T-cell (primary cell): ENCODE measurements at regions of chr1 and their contacts with region 1.

Region 1: DNA sequence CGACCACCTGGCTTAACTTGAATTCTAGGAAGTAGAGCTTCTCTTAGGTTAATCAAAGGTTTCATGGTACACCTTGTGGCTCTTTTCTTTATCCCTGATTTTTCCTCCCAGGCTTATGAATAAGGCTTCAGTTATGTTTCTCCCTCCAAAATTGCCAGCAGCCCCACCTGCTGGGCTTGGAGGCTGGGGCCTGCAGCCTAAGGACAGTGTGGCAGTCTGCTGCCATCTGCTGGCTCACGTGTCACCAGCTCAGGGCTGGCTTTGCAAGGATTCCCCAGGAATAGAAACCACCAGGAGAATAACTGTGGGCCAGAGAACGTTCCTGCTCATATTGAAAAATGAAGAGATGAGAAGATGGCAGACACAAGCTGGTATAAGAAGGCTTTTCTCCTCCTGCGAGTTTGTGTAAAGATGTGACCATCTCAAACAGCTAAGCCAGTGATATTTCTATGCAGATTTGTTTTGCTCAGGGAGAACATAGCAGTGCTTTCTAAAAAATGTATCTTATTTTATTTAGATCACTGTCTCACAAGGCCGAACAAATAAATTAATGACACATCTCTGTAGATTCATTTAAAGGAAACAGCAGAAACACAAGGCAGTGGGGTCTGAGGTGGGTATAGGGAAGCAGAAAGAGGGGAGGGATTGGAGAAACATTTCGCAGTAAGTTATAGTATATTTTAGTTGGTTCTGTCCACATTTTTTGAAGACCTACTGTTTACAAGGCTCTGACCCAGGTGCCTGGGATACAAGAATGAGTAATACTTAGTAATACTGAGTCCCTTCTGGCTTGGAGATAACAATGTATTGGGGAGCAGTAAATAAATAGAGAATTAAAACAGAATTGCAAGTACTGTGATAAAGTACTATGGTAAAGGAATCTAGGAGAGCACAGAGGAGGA is 291.1 kb upstream of the SGIP1 start:
- DNase-seq: peak; percentile 28 to 85 (median 65)
- ATAC-seq: peak; percentile 76 to 90 (median 83)
- H3K4me3 ChIP-seq: no peak overlapping the region
- H3K4me3 Mint-ChIP-seq: no peak overlapping the region
- H3K27ac ChIP-seq: peak overlapping the region; percentile 35
- H3K27ac Mint-ChIP-seq: no peak overlapping the region
- H3K4me1 ChIP-seq: peaks cover 14 to 25% of the 10 kb centered on the region in 2 experiments
- H3K4me1 Mint-ChIP-seq: peaks cover 0 to 27% (median 21%) of the 10 kb centered on the region in 3 donors
- H3K27me3 ChIP-seq: no peaks in the 10 kb centered on the region
- H3K27me3 Mint-ChIP-seq: peaks cover 6 to 7% of the 10 kb centered on the region in 2 donors

Region 2: GRCh38 chr1:65958561-65959350 is 284.1 kb before region 1 on chr1:
- CTCF ChIA-PET with region 1: interaction called, 54 to 58 read pairs
- POLR2A ChIA-PET with region 1: no interaction called
- DNase-seq: peak in 21 of 35 experiments; percentile 1 to 73 (median 13)
- ATAC-seq: peak in 1 of 4 experiments; percentile 61
- H3K4me3 ChIP-seq: no peak overlapping the region
- H3K4me3 Mint-ChIP-seq: no peak overlapping the region
- H3K27ac ChIP-seq: no peak overlapping the region
- H3K27ac Mint-ChIP-seq: no peak overlapping the region
- H3K4me1 ChIP-seq: no peaks in the 10 kb centered on the region
- H3K4me1 Mint-ChIP-seq: no peaks in the 10 kb centered on the region
- H3K27me3 ChIP-seq: peaks cover 0 to 2% of the 10 kb centered on the region in 2 experiments
- H3K27me3 Mint-ChIP-seq: no peaks in the 10 kb centered on the region

Region 3: DNA sequence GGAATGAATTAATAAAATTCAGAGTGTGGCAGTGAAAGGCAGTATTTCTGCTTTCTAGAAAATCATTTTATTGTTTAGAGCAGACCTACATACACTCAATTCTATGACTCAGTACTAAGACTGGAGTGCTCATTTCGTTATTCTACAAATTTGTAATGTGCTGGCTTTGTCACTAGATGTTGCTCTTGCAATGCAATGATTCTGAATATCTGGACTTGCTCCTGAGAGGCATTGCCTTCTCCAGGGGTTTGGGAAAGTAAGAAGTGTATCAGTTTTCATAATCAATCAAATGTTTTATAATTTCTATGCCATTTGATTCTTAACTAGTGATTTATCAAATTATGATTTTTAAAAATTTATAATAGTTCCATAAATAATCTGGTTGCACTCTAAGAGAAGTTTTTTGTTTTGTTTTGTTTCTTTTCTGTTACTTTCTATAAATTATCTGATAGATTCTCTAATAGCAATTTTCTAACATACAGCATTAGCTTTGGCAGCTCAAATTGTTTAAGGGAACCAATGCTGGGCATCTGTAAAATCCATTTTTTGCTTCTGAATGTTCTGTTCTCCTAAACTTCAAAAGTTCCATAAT is 10.5 kb after region 1 on chr1:
- CTCF ChIA-PET with region 1: interaction called, 13 to 23 read pairs
- POLR2A ChIA-PET with region 1: interaction called in 1 of 2 experiments, 3 read pairs
- DNase-seq: peak in 2 of 35 experiments; percentile 29 to 71
- ATAC-seq: peak; percentile 71 to 87 (median 80)
- H3K4me3 ChIP-seq: no peak overlapping the region
- H3K4me3 Mint-ChIP-seq: no peak overlapping the region
- H3K27ac ChIP-seq: no peak overlapping the region
- H3K27ac Mint-ChIP-seq: no peak overlapping the region
- H3K4me1 ChIP-seq: peaks cover 0 to 10% of the 10 kb centered on the region in 2 experiments
- H3K4me1 Mint-ChIP-seq: peaks cover 19 to 40% (median 23%) of the 10 kb centered on the region in 3 donors
- H3K27me3 ChIP-seq: no peaks in the 10 kb centered on the region
- H3K27me3 Mint-ChIP-seq: no peaks in the 10 kb centered on the region

Region 4: DNA sequence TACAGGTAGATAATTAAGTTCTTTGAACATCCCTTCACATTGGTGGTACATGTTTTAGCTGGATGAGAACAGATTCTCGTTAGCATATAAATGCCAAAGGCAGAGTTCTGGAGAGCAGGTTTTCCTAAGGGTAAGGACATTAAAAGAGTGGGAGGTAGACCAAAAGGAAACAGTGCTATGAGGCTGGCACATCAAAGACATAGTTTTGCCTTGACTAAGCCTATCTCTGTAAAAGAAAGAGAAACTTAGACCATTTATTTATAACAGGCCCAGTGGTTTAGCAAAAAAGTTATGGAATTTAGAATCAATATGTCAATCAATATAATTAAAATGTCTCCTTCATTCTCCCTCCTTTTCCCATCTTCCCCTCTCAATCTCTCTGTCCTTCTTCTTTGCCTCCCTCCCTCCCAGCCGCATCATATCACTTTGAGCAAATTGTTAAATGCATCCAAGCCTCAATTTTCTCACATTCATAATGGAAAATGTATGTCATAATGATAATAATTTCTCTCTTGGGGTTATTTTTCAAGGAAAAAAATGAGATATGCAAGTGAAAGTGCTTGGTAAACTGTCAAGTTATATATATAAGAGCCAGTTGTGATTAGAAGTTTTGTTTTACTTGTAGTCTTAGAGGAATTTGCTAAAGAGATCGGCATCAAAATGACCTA is 81.2 kb after region 1 on chr1:
- CTCF ChIA-PET with region 1: no interaction called
- POLR2A ChIA-PET with region 1: no interaction called
- DNase-seq: no peak
- ATAC-seq: no peak
- H3K4me3 ChIP-seq: no peak overlapping the region
- H3K4me3 Mint-ChIP-seq: no peak overlapping the region
- H3K27ac ChIP-seq: no peak overlapping the region
- H3K27ac Mint-ChIP-seq: peak overlapping the region in 1 of 2 donors; percentile 32
- H3K4me1 ChIP-seq: peaks cover 8 to 10% of the 10 kb centered on the region in 2 experiments
- H3K4me1 Mint-ChIP-seq: peaks cover 40 to 52% (median 45%) of the 10 kb centered on the region in 3 donors
- H3K27me3 ChIP-seq: no peaks in the 10 kb centered on the region
- H3K27me3 Mint-ChIP-seq: no peaks in the 10 kb centered on the region

Region 5: DNA sequence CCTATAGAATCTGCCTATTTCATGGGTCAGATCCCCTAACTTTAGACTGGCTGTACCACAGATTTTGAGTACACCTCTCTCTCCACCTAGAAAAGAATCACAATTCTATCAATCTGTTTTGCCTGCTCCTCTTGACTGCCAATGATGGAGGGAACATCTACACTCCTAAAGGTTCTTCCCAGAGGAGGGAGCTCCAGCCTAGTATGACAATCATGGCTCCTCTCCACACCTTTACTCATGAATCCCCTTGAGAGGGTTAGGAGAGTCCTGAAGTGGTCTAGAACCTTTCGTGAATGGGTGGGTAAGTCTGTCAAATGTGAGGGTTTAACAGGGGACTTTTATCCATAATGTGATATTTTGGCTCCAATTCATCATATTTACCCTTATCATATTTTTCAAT is 633.8 kb after region 1 on chr1:
- CTCF ChIA-PET with region 1: no interaction called
- POLR2A ChIA-PET with region 1: no interaction called
- DNase-seq: no peak
- ATAC-seq: no peak
- H3K4me3 ChIP-seq: no peak overlapping the region
- H3K4me3 Mint-ChIP-seq: no peak overlapping the region
- H3K27ac ChIP-seq: no peak overlapping the region
- H3K27ac Mint-ChIP-seq: no peak overlapping the region
- H3K4me1 ChIP-seq: no peaks in the 10 kb centered on the region
- H3K4me1 Mint-ChIP-seq: no peaks in the 10 kb centered on the region
- H3K27me3 ChIP-seq: no peaks in the 10 kb centered on the region
- H3K27me3 Mint-ChIP-seq: no peaks in the 10 kb centered on the region